Endothelial cell of umbilical vein (primary cell): ENCODE measurements at regions of chr12 and their contacts with region 1.

Region 1: GRCh38 chr12:4037747-4038312 is 164.6 kb upstream of the PARP11 start:
- DNase-seq: peak; percentile 39
- H3K4me3 ChIP-seq: no peak overlapping the region
- H3K27ac ChIP-seq: no peak overlapping the region
- H3K4me1 ChIP-seq: no peaks in the 10 kb centered on the region
- H3K27me3 ChIP-seq: peaks cover 0 to 5% of the 10 kb centered on the region in 2 experiments
- CTCF ChIP-seq: peak; percentile 39 to 61
- POLR2A ChIP-seq: no peak

Region 2: GRCh38 chr12:3885277-3886094 is 152.3 kb before region 1 on chr12:
- CTCF ChIA-PET with region 1: interaction called, 191 read pairs
- POLR2A ChIA-PET with region 1: no interaction called
- dilution Hi-C with region 1: no loop called
- intact Hi-C with region 1: loop called (anchors 1 kb)
- DNase-seq: peak; percentile 57
- H3K4me3 ChIP-seq: peak overlapping the region in 1 of 3 experiments; percentile 50
- H3K27ac ChIP-seq: no peak overlapping the region
- H3K4me1 ChIP-seq: no peaks in the 10 kb centered on the region
- H3K27me3 ChIP-seq: peaks cover 0 to 5% of the 10 kb centered on the region in 2 experiments
- CTCF ChIP-seq: peak; percentile 55 to 61
- POLR2A ChIP-seq: no peak

Region 3: GRCh38 chr12:3988519-3989448 is 49.0 kb before region 1 on chr12:
- CTCF ChIA-PET with region 1: interaction called, 15 read pairs
- POLR2A ChIA-PET with region 1: no interaction called
- dilution Hi-C with region 1: no loop called
- intact Hi-C with region 1: no loop called
- DNase-seq: no peak
- H3K4me3 ChIP-seq: no peak overlapping the region
- H3K27ac ChIP-seq: no peak overlapping the region
- H3K4me1 ChIP-seq: no peaks in the 10 kb centered on the region
- H3K27me3 ChIP-seq: peaks cover 0 to 3% of the 10 kb centered on the region in 2 experiments
- CTCF ChIP-seq: no peak
- POLR2A ChIP-seq: no peak

Region 4: DNA sequence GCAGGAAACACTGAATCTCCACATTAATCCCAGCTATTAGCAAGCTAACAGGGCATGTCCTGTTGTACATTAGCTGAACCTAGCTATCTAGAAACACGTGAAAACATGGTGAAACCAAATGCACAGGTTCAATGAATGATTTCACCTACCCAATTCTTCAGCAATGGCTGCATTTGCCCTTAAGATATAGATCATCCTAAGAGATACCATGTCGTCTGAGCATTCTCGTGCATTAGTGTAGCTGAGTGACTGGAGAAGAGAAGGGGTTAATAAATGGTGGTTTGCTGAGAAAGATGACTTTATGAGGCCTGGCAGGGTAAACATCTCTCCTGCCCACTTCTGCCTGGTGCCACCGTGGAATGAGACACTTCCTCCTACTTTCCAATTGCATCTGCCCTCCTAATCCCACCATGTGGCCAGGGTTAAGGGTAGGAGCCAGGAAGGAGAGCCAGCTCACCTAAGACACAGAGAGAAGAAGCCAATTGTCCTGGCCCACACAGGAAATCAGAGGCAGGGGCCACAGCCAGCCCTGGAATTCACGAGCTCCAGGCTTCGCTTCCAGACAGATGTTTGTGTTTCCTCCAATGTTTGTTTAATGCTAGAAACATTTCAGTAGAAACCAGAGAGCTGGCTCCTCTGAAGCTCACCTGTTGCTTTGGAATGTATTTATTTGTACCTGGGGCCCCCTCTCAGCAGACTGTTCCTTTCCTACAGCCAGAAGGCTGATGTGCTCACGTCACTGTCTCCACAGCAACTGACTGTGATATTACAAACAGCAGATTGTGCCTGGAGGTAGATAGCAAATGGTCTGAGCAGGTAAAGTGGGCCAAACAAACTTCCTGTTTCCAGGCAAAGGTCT is 38.6 kb before region 1 on chr12:
- CTCF ChIA-PET with region 1: interaction called, 33 read pairs
- POLR2A ChIA-PET with region 1: no interaction called
- dilution Hi-C with region 1: no loop called
- intact Hi-C with region 1: loop called (anchors 1 kb)
- DNase-seq: no peak
- H3K4me3 ChIP-seq: no peak overlapping the region
- H3K27ac ChIP-seq: no peak overlapping the region
- H3K4me1 ChIP-seq: no peaks in the 10 kb centered on the region
- H3K27me3 ChIP-seq: no peaks in the 10 kb centered on the region
- CTCF ChIP-seq: no peak
- POLR2A ChIP-seq: no peak

Region 5: GRCh38 chr12:4049298-4050080 is 11.7 kb after region 1 on chr12:
- CTCF ChIA-PET with region 1: interaction called, 11 read pairs
- POLR2A ChIA-PET with region 1: no interaction called
- dilution Hi-C with region 1: no loop called
- intact Hi-C with region 1: no loop called
- DNase-seq: no peak
- H3K4me3 ChIP-seq: no peak overlapping the region
- H3K27ac ChIP-seq: no peak overlapping the region
- H3K4me1 ChIP-seq: no peaks in the 10 kb centered on the region
- H3K27me3 ChIP-seq: no peaks in the 10 kb centered on the region
- CTCF ChIP-seq: no peak
- POLR2A ChIP-seq: no peak

Region 6: GRCh38 chr12:4164559-4165558 is 127.0 kb after region 1 on chr12:
- CTCF ChIA-PET with region 1: no interaction called
- POLR2A ChIA-PET with region 1: no interaction called
- dilution Hi-C with region 1: no loop called
- intact Hi-C with region 1: no loop called
- DNase-seq: peak; percentile 54
- H3K4me3 ChIP-seq: peak overlapping the region in 2 of 3 experiments; percentile 19 to 38
- H3K27ac ChIP-seq: no peak overlapping the region
- H3K4me1 ChIP-seq: no peaks in the 10 kb centered on the region
- H3K27me3 ChIP-seq: no peaks in the 10 kb centered on the region
- CTCF ChIP-seq: no peak
- POLR2A ChIP-seq: no peak